Activated T-helper 1 cell treated with anti-CD3 and anti-CD28 coated beads, Interleukin-12 subunit alpha, Interleukin-12 subunit beta, Interleukin-2, Interleukin-4 antibody, amounts not matched to agents 30 ng/mL and 10 ng/mL and 1 ng/mL, durations not matched to agents 14 hours and 24 hours and 36 hours (primary cell): ENCODE measurements at regions of chr17 and their contacts with region 1.

Region 1: GRCh38 chr17:7989781-7990655 is 12.4 kb upstream of the GUCY2D start:
- DNase-seq: peak; percentile 86
- H3K4me3 Mint-ChIP-seq: peak overlapping the region; percentile 76
- H3K27ac Mint-ChIP-seq: peak overlapping the region; percentile 67
- H3K4me1 Mint-ChIP-seq: peaks cover 21% of the 10 kb centered on the region
- H3K27me3 Mint-ChIP-seq: peaks cover 9% of the 10 kb centered on the region

Region 2: DNA sequence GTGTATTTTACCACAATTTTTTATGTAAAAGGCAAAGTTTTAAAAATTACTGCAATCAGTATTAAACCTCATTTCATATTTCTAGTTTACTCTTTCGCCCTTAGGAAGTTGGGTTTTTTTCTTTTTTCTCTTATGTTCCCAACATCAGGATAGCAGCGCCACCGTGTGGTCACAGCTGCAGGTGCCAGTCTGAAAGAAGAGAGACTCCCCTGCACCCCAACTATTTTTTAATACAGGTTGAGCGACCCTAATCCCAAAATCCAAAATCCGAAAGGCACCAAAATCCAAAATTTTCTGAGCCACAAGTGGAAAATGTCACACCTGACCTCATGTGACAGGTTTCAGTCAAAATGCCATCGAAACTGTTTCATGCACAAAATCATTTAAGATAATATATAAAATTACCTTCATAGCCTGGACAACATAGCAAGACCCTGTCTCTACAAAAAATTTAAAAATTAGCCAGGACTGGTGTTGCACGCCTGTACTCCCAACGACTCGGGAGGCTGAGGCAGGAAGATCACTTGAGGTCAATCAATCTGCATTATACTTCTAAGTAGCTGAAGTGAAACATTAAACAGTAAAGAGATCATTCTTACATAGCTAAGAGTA is 853.6 kb before region 1 on chr17:
- intact Hi-C with region 1: no loop called
- DNase-seq: peak; percentile 57
- H3K4me3 Mint-ChIP-seq: no peak overlapping the region
- H3K27ac Mint-ChIP-seq: no peak overlapping the region
- H3K4me1 Mint-ChIP-seq: peaks cover 23% of the 10 kb centered on the region
- H3K27me3 Mint-ChIP-seq: peaks cover 17% of the 10 kb centered on the region

Region 3: DNA sequence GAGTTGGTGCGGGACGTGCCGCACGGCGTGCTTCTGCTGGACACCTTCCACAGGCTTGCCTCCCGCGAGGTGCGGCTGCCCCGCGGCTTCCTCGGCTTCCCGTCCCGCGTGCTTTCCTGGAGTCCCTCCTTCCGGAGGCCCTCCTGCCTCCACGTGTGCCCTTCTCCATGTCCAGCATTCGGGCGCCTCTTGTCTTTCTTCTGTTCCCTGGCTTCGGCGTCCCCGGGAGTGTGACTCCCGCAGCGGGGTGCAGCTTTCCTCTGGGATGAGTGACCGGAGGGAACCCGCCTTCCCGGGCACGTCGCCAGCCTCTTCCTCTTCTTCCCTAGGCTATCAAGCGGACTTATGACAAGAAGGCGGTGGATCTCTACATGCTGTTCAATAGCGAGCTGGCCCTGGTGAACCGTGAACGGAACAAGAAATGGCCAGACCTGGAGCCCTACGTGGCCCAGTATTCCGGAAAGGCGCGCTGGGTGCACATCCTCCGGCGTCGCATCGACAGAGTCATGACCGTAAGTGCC is 249.5 kb before region 1 on chr17:
- intact Hi-C with region 1: loop called (anchors 1 kb)
- DNase-seq: no peak
- H3K4me3 Mint-ChIP-seq: no peak overlapping the region
- H3K27ac Mint-ChIP-seq: no peak overlapping the region
- H3K4me1 Mint-ChIP-seq: no peaks in the 10 kb centered on the region
- H3K27me3 Mint-ChIP-seq: peaks cover 17% of the 10 kb centered on the region

Region 4: GRCh38 chr17:7856883-7857723 is 132.9 kb before region 1 on chr17 and contains the start of gene NAA38:
- intact Hi-C with region 1: loop called (anchors 1 kb)
- DNase-seq: peak; percentile 92
- H3K4me3 Mint-ChIP-seq: no peak within 1 kb of the TSS
- H3K27ac Mint-ChIP-seq: no peak within 1 kb of the TSS
- H3K4me1 Mint-ChIP-seq: no peaks in the 10 kb centered on the region
- H3K27me3 Mint-ChIP-seq: no peaks in the 10 kb centered on the region
- total RNA-seq, gene NAA38: 36.4 and 43.5 TPM in 2 replicates

Region 5: GRCh38 chr17:7887482-7888183 is 102.4 kb before region 1 on chr17:
- intact Hi-C with region 1: loop called (anchors 1 kb)
- DNase-seq: peak; percentile 77
- H3K4me3 Mint-ChIP-seq: no peak overlapping the region
- H3K27ac Mint-ChIP-seq: no peak overlapping the region
- H3K4me1 Mint-ChIP-seq: peaks cover 3% of the 10 kb centered on the region
- H3K27me3 Mint-ChIP-seq: no peaks in the 10 kb centered on the region

Region 6: GRCh38 chr17:7951143-7951803 is 38.7 kb before region 1 on chr17:
- intact Hi-C with region 1: loop called (anchors 1 kb)
- DNase-seq: peak; percentile 44
- H3K4me3 Mint-ChIP-seq: peak overlapping the region; percentile 40
- H3K27ac Mint-ChIP-seq: peak overlapping the region; percentile 91
- H3K4me1 Mint-ChIP-seq: peaks cover 15% of the 10 kb centered on the region
- H3K27me3 Mint-ChIP-seq: no peaks in the 10 kb centered on the region

Region 7: DNA sequence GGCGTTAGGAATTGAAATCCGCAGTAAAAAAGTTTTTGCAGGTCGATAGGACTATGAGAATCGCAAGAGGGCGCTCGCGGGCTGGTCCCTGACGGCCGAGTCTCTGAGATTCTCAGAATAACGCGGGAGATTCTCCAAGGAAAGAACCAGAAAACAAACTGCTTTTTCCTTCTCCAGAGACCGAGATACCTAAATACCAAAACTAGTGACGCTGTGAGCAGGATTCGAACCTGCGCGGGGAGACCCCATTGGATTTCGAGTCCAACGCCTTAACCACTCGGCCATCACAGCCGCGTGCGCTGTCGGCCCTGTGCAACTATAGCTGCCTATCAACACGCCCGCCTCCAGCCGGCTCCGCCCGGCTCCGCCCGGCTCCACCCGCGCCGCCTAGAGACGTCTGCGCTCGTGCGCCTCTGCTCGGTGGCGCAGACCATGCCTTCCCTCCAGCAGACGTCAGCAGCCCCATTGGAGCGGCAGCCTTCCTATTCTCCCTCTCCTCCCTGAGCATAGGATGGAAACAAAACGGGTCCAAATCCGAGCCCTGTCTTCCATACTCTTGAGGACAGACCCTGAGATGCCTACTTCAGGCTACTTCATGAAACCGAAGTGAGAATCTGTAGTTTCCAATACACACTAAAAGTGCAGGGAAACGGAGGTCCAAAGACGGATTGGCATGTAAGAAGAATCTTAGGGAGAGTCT is 148.8 kb after region 1 on chr17:
- intact Hi-C with region 1: no loop called
- DNase-seq: peak; percentile 95
- H3K4me3 Mint-ChIP-seq: no peak overlapping the region
- H3K27ac Mint-ChIP-seq: no peak overlapping the region
- H3K4me1 Mint-ChIP-seq: no peaks in the 10 kb centered on the region
- H3K27me3 Mint-ChIP-seq: peaks cover 11% of the 10 kb centered on the region